Dorsolateral prefrontal cortex (tissue), 120 donors: ENCODE measurements at regions of chr5 and their contacts with region 1.

Region 1: GRCh38 chr5:120655828-120656435 is 191.8 kb downstream of the PRR16 start:
- DNase-seq: peak in 2 of 10 donors; percentile 33 to 38
- H3K4me3 ChIP-seq: no peak overlapping the region
- H3K27ac ChIP-seq: no peak overlapping the region
- H3K27me3 ChIP-seq: no peaks in the 10 kb centered on the region
- CTCF ChIP-seq: peak in 51 of 56 donors; percentile 16 to 64 (median 50)

Region 2: GRCh38 chr5:120368923-120369715 is 286.8 kb before region 1 on chr5:
- intact Hi-C with region 1: no loop called
- DNase-seq: no peak
- H3K4me3 ChIP-seq: no peak overlapping the region
- H3K27ac ChIP-seq: no peak overlapping the region
- H3K27me3 ChIP-seq: no peaks in the 10 kb centered on the region
- CTCF ChIP-seq: no peak

Region 3: DNA sequence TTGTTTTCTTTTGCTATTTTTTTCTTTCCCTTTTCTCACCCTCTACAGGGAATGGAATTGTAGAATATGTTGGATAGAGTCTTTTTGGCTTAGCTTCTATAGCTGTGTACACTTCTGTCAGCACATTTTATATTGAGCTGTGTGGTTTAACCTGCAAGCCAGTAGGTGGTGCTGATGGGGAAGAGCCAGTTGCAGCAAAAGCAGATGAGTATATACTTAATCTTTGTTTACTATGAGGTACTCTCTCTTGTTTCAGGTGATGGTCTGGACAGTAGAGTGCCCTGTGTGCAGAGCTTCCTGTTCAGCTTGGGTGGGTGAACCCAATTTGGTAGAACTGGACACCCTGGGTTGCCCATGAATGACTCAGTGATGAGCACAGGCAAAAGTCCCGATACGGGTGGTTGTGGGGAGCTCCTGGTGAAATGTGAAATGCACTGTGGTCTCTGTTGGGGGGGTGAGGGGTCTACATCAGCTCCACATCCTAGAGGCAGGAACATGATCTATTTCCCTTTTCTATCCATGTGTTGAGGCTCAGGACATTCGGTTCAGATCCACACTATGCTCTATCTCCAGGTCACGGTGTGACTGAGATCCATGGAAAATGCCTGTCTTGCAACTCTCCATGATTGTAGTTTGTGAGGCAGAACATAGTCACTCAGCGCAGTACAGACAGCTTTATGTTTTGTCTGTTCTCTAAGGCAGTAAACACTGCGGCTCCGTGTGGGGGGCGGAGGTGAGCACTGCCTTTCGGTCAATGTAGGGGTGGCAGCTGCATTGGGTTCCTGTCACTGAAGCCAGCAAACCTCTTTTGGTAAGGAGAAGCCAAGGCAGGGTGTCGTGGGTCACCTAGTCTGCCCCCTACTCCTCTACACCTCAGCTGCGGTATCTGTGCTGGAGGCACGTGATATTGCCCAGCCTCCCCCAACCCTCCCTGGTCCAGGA is 161.4 kb after region 1 on chr5:
- intact Hi-C with region 1: no loop called
- DNase-seq: no peak
- H3K4me3 ChIP-seq: no peak overlapping the region
- H3K27ac ChIP-seq: no peak overlapping the region
- H3K27me3 ChIP-seq: no peaks in the 10 kb centered on the region
- CTCF ChIP-seq: peak in 10 of 56 donors; percentile 9 to 33 (median 15)

Region 4: GRCh38 chr5:121949867-121950266 is 1293.9 kb after region 1 on chr5:
- intact Hi-C with region 1: loop called in 1 of 2 experiments (anchors 5 kb)
- DNase-seq: peak in 2 of 10 donors; percentile 10 to 30
- H3K4me3 ChIP-seq: no peak overlapping the region
- H3K27ac ChIP-seq: no peak overlapping the region
- H3K27me3 ChIP-seq: no peaks in the 10 kb centered on the region
- CTCF ChIP-seq: peak; percentile 6 to 82 (median 66)